Activated CD4-positive, alpha-beta T cell treated with anti-CD3 and anti-CD28 coated beads for 36 hours (primary cell): ENCODE measurements at regions of chr1 and their contacts with region 1.

Region 1: DNA sequence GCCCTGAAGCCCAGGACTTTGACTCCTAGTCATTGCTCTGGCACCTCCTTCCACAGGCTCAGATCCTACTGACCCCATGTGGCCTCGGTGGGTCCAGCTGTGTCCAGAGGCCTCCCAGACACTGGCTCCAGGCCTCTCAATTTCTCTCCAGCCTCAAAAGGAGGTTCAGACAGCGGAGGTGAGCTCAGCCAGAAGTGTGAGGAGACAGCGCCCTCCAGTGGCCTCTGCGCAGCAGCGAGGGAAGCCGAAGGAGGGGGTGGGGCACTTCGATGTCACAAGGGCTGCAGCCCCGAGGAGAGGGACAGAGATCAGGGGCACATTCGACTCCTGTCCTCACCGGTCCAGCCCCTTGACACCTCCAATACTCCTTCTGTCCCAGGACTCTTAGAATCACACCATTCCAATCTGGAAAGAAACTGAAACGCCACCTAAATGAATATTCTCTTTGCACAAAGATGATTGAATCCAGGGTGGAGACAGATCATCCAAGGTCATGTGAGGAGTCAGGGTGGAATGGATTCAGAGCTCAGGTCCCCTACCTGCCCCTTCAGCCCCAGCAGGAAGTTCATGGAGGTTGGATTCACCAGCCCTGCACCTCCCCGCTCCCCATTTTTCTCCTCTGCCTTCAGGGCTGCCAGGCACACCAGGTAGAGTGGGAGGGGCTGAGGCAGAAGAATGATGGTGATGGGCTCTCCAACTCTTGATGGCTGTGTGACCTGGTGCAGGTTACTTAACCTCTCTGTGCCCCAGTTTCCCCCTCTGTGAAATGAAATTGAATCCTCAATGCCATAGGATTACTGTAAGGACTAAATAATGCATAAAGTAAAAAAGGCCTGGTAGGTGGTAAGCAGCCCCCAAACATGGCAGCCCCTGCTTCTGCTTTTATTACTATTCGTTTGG is 34.8 kb upstream of the ZBTB40 start:
- DNase-seq: peak; percentile 91
- ATAC-seq: peak; percentile 84
- H3K4me3 Mint-ChIP-seq: no peak overlapping the region
- H3K27ac Mint-ChIP-seq: no peak overlapping the region
- H3K4me1 Mint-ChIP-seq: peaks cover 3% of the 10 kb centered on the region
- H3K27me3 Mint-ChIP-seq: peaks cover 32% of the 10 kb centered on the region

Region 2: DNA sequence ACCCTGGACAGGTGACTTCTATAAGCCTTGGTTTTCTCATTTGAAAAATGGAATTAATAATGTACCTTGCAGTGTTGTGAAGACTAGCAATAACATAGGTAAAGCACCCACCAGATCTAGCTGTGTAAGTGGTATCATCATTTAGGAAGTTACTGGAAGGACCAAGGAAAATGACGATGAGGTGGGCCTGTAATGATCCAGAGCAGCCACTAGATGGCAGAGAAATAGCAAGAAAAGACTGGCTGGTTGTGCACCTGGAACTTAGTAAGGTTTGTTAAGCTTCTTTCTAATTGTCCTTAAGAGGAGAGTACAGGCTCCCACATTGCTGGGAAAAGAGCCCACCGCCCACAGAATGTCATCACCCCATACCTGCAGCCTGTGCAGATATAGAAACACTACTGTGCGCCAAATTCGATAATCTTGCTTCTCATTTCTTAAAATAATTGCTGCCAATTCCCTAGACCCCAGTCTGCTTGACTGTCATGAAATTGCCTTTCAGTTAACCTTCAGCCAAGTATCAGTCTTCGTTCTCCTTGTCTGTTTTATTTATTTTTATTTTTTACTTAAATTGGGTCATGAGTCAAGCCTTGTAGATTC is 311.1 kb before region 1 on chr1:
- CTCF ChIA-PET with region 1: interaction called, 5 read pairs
- POLR2A ChIA-PET with region 1: no interaction called
- intact Hi-C with region 1: loop called in 1 of 2 experiments (anchors 1 kb)
- DNase-seq: peak; percentile 41
- ATAC-seq: peak; percentile 50
- H3K4me3 Mint-ChIP-seq: no peak overlapping the region
- H3K27ac Mint-ChIP-seq: peak overlapping the region; percentile 86
- H3K4me1 Mint-ChIP-seq: peaks cover 66% of the 10 kb centered on the region
- H3K27me3 Mint-ChIP-seq: no peaks in the 10 kb centered on the region

Region 3: GRCh38 chr1:22137004-22137720 is 279.6 kb before region 1 on chr1:
- CTCF ChIA-PET with region 1: interaction called, 15 read pairs
- POLR2A ChIA-PET with region 1: no interaction called
- intact Hi-C with region 1: loop called in 1 of 2 experiments (anchors 1 kb)
- DNase-seq: no peak
- ATAC-seq: no peak
- H3K4me3 Mint-ChIP-seq: no peak overlapping the region
- H3K27ac Mint-ChIP-seq: no peak overlapping the region
- H3K4me1 Mint-ChIP-seq: no peaks in the 10 kb centered on the region
- H3K27me3 Mint-ChIP-seq: peaks cover 18% of the 10 kb centered on the region

Region 4: DNA sequence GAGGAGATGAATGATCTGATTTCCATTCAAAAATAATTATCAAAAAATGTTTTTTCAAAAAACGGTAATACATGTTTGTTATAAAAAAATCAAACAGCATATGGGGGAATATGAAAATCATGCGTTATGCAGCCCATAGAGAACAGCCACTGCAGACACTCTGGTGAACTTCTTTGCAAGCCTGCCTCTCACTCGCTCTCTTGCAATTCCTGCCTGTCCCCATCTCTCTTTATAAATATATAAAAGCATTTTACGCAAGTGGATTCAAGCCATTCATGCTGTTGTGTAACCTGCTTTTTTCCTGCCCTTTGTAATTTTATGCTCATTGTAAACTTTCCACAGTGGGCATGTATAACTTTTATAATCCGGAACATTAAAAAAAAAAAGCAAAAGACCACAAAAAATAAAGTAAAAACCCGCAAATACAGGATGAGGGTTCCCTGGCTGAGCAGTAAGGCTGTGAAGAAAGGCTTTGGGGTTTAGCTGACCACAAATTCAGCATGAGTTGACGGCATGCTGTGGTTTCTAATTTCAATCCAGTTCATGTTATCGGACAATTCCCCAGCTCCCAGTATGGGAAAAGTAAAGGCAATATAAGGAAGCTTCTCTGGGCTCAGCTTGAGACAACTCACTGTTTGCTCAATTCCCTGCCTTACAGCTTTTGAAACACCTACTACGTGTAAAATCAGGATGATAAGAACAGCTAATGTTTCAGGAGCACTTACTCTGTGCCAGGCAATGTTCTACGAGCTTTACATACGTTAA is 18.0 kb before region 1 on chr1:
- CTCF ChIA-PET with region 1: interaction called, 10 read pairs
- POLR2A ChIA-PET with region 1: no interaction called
- intact Hi-C with region 1: no loop called
- DNase-seq: no peak
- ATAC-seq: no peak
- H3K4me3 Mint-ChIP-seq: no peak overlapping the region
- H3K27ac Mint-ChIP-seq: no peak overlapping the region
- H3K4me1 Mint-ChIP-seq: peaks cover 16% of the 10 kb centered on the region
- H3K27me3 Mint-ChIP-seq: peaks cover 64% of the 10 kb centered on the region